ENCODE measurements at regions of chr4 and their contacts with region 1.

Region 1: GRCh38 chr4:168917138-168917779 is 92.8 kb downstream of the CBR4 start:
- DNase-seq: peak in 2 of 9 donors; percentile 12
- ATAC-seq: no peak
- H3K4me3 ChIP-seq: no peak overlapping the region
- H3K4me3 Mint-ChIP-seq: no peak overlapping the region
- H3K27ac ChIP-seq: no peak overlapping the region
- H3K27ac Mint-ChIP-seq: no peak overlapping the region
- H3K4me1 ChIP-seq: no peaks in the 10 kb centered on the region
- H3K4me1 Mint-ChIP-seq: no peaks in the 10 kb centered on the region
- H3K27me3 ChIP-seq: no peaks in the 10 kb centered on the region
- H3K27me3 Mint-ChIP-seq: no peaks in the 10 kb centered on the region

Region 2: DNA sequence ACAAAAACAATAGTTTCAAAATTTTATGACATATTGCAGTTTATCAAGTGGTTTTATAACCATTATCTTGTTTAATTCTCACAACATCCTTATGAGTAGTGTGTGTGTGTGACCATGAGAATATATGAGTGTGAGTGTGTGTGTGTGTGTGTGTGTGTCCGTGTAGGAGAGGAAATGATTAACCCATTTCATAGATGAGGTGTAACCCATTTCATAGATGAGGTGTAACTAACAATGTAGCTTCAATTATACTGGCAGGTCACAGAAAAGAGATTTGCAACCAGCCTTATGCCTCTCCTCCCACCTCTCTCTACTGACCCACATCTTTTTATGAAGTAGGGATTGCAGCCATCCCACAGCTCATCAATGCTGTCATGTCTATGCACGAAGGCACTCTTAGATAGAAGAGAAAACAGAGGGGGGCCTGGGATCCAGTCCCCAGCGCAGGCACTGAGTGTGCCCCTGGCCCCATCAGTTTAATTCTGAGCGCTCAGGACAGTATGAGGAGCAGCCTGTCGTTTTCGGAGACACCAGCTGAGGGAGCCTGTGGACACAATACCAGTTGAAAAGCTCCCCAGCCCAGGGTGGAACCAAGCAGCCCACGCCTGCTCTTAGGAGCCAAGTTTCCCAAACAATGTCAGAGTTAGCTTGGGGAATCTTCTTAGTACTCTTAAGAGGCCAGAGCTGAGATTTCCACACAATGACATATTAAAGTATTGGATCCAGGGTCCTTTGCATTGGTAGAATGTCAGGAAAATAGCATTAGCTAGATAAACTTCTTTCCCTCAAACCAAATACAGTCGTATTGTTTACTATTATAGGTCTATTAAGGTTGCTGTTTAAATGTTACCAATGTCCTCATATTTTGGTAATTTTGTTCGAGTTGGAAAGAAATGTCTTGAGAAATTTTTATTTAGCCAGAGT is 331.8 kb before region 1 on chr4:
- CTCF ChIA-PET with region 1: interaction called, 3 read pairs
- POLR2A ChIA-PET with region 1: no interaction called
- intact Hi-C with region 1: loop called in 1 of 2 experiments (anchors 1 kb)
- DNase-seq: peak in 1 of 9 donors; percentile 9
- ATAC-seq: peak; percentile 64
- H3K4me3 ChIP-seq: no peak overlapping the region
- H3K4me3 Mint-ChIP-seq: no peak overlapping the region
- H3K27ac ChIP-seq: no peak overlapping the region
- H3K27ac Mint-ChIP-seq: no peak overlapping the region
- H3K4me1 ChIP-seq: no peaks in the 10 kb centered on the region
- H3K4me1 Mint-ChIP-seq: no peaks in the 10 kb centered on the region
- H3K27me3 ChIP-seq: no peaks in the 10 kb centered on the region
- H3K27me3 Mint-ChIP-seq: peaks cover 24 to 42% (median 29%) of the 10 kb centered on the region in 5 donors

Region 3: GRCh38 chr4:168710353-168710946 is 206.8 kb before region 1 on chr4:
- CTCF ChIA-PET with region 1: no interaction called
- POLR2A ChIA-PET with region 1: no interaction called
- intact Hi-C with region 1: loop called in 1 of 2 experiments (anchors 1 kb)
- DNase-seq: no peak
- ATAC-seq: no peak
- H3K4me3 ChIP-seq: no peak overlapping the region
- H3K4me3 Mint-ChIP-seq: no peak overlapping the region
- H3K27ac ChIP-seq: no peak overlapping the region
- H3K27ac Mint-ChIP-seq: no peak overlapping the region
- H3K4me1 ChIP-seq: no peaks in the 10 kb centered on the region
- H3K4me1 Mint-ChIP-seq: peaks cover 0 to 10% (median 4%) of the 10 kb centered on the region in 7 donors
- H3K27me3 ChIP-seq: no peaks in the 10 kb centered on the region
- H3K27me3 Mint-ChIP-seq: peaks cover 0 to 6% (median 5%) of the 10 kb centered on the region in 5 donors

Measured in naive thymus-derived CD4-positive, alpha-beta T cell (primary cell).